Activated CD4-positive, alpha-beta T cell treated with anti-CD3 and anti-CD28 coated beads for 36 hours (primary cell): ENCODE measurements at regions of chr1 and their contacts with region 1.

Region 1: GRCh38 chr1:40224040-40224439 is 23.7 kb upstream of the TMCO2 start:
- DNase-seq: peak; percentile 45
- ATAC-seq: peak; percentile 88
- H3K4me3 Mint-ChIP-seq: no peak overlapping the region
- H3K27ac Mint-ChIP-seq: no peak overlapping the region
- H3K4me1 Mint-ChIP-seq: peaks cover 23% of the 10 kb centered on the region
- H3K27me3 Mint-ChIP-seq: no peaks in the 10 kb centered on the region

Region 2: DNA sequence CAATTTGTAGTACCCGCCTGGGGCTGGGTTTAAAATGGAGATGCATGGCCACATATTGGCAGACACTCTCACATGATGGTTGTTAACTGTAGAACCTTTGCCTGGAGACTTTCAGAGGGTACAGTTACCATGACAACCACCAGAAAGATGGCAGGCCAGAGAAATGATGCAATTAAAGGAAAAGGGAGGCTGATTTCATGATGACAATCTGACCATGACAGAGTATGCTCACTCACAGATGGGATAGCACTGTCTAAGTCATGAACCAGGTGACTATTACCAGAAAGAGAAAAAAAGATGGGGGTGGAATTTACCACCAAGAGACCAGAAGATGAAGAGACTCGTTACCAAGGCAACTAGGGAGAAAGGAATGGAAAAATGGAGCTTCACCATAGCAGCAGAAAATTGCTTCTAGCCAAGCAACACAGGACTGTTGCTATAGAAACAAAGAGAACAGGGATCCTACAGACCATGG is 337.2 kb before region 1 on chr1:
- CTCF ChIA-PET with region 1: no interaction called
- POLR2A ChIA-PET with region 1: no interaction called
- intact Hi-C with region 1: no loop called
- DNase-seq: peak; percentile 27
- ATAC-seq: peak; percentile 52
- H3K4me3 Mint-ChIP-seq: no peak overlapping the region
- H3K27ac Mint-ChIP-seq: no peak overlapping the region
- H3K4me1 Mint-ChIP-seq: peaks cover 8% of the 10 kb centered on the region
- H3K27me3 Mint-ChIP-seq: peaks cover 5% of the 10 kb centered on the region

Region 3: GRCh38 chr1:39901698-39902459 is 322.2 kb before region 1 on chr1 and contains the start of gene MYCL:
- CTCF ChIA-PET with region 1: no interaction called
- POLR2A ChIA-PET with region 1: no interaction called
- intact Hi-C with region 1: no loop called
- DNase-seq: peak; percentile 86
- ATAC-seq: peak; percentile 92
- H3K4me3 Mint-ChIP-seq: peak within 1 kb of the TSS; percentile 66
- H3K27ac Mint-ChIP-seq: no peak within 1 kb of the TSS
- H3K4me1 Mint-ChIP-seq: peaks cover 2% of the 10 kb centered on the region
- H3K27me3 Mint-ChIP-seq: peaks cover 51% of the 10 kb centered on the region
- total RNA-seq, gene MYCL: 0.11 to 0.16 TPM

Region 4: DNA sequence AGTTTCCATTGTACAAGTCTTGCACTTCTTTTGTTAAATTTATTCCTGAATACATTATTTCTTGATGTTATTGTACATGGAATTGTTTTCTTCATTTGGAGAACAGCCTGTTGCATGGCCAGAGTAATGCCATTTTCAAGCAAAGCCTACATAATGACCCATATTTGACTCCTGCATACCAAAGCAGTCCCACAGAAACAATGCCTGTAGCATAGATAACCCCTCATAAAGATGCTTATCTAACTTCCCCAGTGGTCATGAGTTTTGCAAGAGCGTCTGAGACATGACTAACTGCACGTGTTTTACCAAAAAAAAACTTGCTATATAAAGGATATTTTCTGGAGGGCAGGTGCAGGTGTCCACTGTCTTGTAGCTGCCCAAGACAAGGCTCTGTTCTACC is 93.1 kb before region 1 on chr1:
- CTCF ChIA-PET with region 1: no interaction called
- POLR2A ChIA-PET with region 1: no interaction called
- intact Hi-C with region 1: no loop called
- DNase-seq: no peak
- ATAC-seq: no peak
- H3K4me3 Mint-ChIP-seq: no peak overlapping the region
- H3K27ac Mint-ChIP-seq: no peak overlapping the region
- H3K4me1 Mint-ChIP-seq: no peaks in the 10 kb centered on the region
- H3K27me3 Mint-ChIP-seq: peaks cover 6% of the 10 kb centered on the region

Region 5: DNA sequence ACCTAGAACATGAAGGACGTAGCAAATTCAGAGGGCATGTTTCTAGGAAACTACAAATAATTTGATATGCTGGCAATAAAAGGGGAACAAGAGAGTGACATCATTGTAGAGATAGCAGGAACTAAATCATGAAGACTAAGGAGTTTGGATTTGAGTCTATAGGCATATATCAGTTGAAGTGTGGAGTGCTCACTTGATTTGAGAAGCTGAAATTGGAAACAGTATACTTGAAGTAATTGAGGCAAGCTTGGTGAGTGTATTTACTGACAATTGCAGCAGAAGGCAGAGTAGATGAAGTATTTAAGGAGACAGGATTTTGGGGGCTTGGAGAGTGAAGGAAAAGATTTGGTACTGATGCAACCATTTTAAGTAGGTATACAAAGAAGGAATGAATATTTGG is 17.3 kb after region 1 on chr1:
- CTCF ChIA-PET with region 1: interaction called, 5 read pairs
- POLR2A ChIA-PET with region 1: interaction called, 8 read pairs
- intact Hi-C with region 1: loop called in 1 of 2 experiments (anchors 2 kb)
- DNase-seq: no peak
- ATAC-seq: peak; percentile 62
- H3K4me3 Mint-ChIP-seq: peak overlapping the region; percentile 6
- H3K27ac Mint-ChIP-seq: peak overlapping the region; percentile 81
- H3K4me1 Mint-ChIP-seq: peaks cover 52% of the 10 kb centered on the region
- H3K27me3 Mint-ChIP-seq: peaks cover 3% of the 10 kb centered on the region

Region 6: DNA sequence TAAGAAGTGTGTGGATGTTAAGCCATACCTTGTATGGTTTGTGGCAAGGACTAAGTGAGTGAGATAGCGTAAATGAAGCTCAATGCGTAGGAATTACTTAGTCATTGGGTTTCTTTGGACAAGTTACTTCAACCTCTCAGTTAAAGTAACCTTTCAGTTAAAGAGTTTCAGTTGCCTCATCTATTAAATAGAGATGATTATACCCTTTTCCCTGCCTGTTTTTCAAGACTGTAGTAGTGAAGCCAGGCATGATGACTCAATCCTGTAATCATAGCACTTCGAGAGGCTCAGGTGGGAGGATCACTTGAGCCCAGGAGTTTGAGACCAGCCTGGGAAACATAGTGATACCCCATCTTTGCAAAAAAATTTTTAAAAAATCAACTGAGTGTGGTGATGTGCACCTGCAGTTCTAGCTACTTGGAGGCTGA is 40.3 kb after region 1 on chr1:
- CTCF ChIA-PET with region 1: interaction called, 3 read pairs
- POLR2A ChIA-PET with region 1: no interaction called
- intact Hi-C with region 1: loop called (anchors 1 to 5 kb)
- DNase-seq: peak; percentile 48
- ATAC-seq: peak; percentile 94
- H3K4me3 Mint-ChIP-seq: no peak overlapping the region
- H3K27ac Mint-ChIP-seq: peak overlapping the region; percentile 91
- H3K4me1 Mint-ChIP-seq: peaks cover 62% of the 10 kb centered on the region
- H3K27me3 Mint-ChIP-seq: no peaks in the 10 kb centered on the region